HepG2 (cell line): ENCODE measurements at regions of chr16 and their contacts with region 1.

Region 1: GRCh38 chr16:31873556-31874365 is at the start of gene ZNF267:
- DNase-seq: peak; percentile 94
- ATAC-seq: peak; percentile 90
- H3K4me3 ChIP-seq: peak within 1 kb of the TSS; percentile 89 to 99 (median 95)
- H3K27ac ChIP-seq: peak within 1 kb of the TSS; percentile 89
- H3K4me1 ChIP-seq: peaks cover 59% of the 10 kb centered on the region
- H3K27me3 ChIP-seq: peaks cover 0 to 13% of the 10 kb centered on the region in 2 experiments; a peak in 2 of 5 replicates
- CTCF ChIP-seq: no peak
- EP300 ChIP-seq: 0 out of 4 replicates have a peak, but pooled peaks of 1 of the 2 experiments have one; percentile 9
- POLR2A ChIP-seq: peak; percentile 86 to 92
- RAD21 ChIP-seq: peak; percentile 12; the same call in 1 of the 2 replicates
- total RNA-seq, gene ZNF267: 30.0 and 42.4 TPM in 2 replicates

Region 2: DNA sequence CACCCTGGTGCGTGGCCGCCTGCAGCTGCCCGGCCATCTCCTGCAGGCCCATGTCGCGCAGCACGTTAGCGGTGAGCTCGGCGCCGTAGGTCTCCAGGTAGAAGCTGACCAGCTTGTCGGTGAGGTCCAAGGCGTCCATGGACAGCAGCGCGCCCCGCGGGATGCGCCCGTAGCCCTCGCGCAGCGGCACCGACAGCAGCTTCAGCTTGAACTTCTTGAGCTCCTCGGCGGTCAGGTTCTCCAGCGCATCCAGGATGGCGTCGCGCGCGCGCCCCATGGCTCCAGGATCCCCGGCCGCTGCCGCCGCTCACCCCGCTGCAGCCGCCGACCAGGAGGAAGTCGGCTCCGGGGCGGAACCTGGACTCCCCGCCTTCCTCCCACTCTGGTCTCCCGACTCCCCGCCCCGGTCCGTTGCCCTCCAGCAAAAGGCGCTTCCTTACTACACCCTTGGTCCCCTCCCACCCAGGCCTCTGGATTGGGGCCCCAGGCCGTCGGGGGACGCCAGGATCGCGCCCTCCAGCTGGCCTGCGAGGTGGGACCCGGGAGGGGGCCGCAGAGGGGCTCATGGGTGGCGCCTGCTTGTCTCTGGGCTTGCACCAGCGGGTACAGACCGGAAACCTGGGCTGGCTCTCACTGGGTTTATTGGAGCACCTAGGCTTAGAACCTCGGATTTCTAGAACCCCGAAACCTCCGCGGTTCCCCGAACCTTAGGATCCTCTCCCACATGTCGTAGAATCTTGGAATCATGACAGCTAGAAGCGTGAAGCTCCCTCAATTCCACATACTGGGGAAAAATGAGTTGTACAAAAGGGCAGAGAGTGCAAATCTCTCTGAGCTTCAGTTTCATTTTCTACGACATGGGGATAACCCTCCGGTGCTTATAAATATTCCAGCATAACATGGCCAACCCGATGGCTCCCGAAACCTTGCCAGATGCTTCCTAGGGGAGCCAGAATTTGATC is 671.1 kb before region 1 on chr16 and contains the start of gene PYCARD:
- CTCF ChIA-PET with region 1: no interaction called
- POLR2A ChIA-PET with region 1: no interaction called
- in situ Hi-C with region 1: loop called (anchors 25 kb)
- intact Hi-C with region 1: no loop called
- DNase-seq: no peak
- ATAC-seq: peak; percentile 23
- H3K4me3 ChIP-seq: peak within 1 kb of the TSS; percentile 61 to 77 (median 61)
- H3K27ac ChIP-seq: no peak within 1 kb of the TSS
- H3K4me1 ChIP-seq: peaks cover 57% of the 10 kb centered on the region
- H3K27me3 ChIP-seq: peaks cover 0 to 35% of the 10 kb centered on the region in 2 experiments; a peak in 4 of 5 replicates
- CTCF ChIP-seq: no peak
- EP300 ChIP-seq: no peak
- POLR2A ChIP-seq: peak in 1 of 2 experiments; percentile 38; a peak in 2 of 4 replicates
- RAD21 ChIP-seq: peak; percentile 19; the same call in 1 of the 2 replicates
- total RNA-seq, gene PYCARD: 4.4 and 4.8 TPM in 2 replicates

Region 3: GRCh38 chr16:31476303-31477219 is 397.2 kb before region 1 on chr16:
- CTCF ChIA-PET with region 1: no interaction called
- POLR2A ChIA-PET with region 1: interaction called, 11 read pairs
- in situ Hi-C with region 1: no loop called
- intact Hi-C with region 1: no loop called
- DNase-seq: peak; percentile 63
- ATAC-seq: peak; percentile 63
- H3K4me3 ChIP-seq: peak overlapping the region; percentile 71 to 94 (median 92)
- H3K27ac ChIP-seq: peak overlapping the region; percentile 80
- H3K4me1 ChIP-seq: peaks cover 77% of the 10 kb centered on the region
- H3K27me3 ChIP-seq: peaks cover 0 to 16% of the 10 kb centered on the region in 2 experiments; a peak in 3 of 5 replicates
- CTCF ChIP-seq: no peak
- EP300 ChIP-seq: no peak
- POLR2A ChIP-seq: peak; percentile 8 to 72; a peak in 2 of 4 replicates
- RAD21 ChIP-seq: no peak

Region 4: GRCh38 chr16:31678649-31679325 is 195.0 kb before region 1 on chr16:
- CTCF ChIA-PET with region 1: no interaction called
- POLR2A ChIA-PET with region 1: no interaction called
- in situ Hi-C with region 1: no loop called
- intact Hi-C with region 1: no loop called
- DNase-seq: no peak
- ATAC-seq: no peak
- H3K4me3 ChIP-seq: no peak overlapping the region
- H3K27ac ChIP-seq: no peak overlapping the region
- H3K4me1 ChIP-seq: no peaks in the 10 kb centered on the region
- H3K27me3 ChIP-seq: no peaks in the 10 kb centered on the region
- CTCF ChIP-seq: no peak
- EP300 ChIP-seq: no peak
- POLR2A ChIP-seq: no peak
- RAD21 ChIP-seq: no peak

Region 5: GRCh38 chr16:31713071-31713944 is 160.5 kb before region 1 on chr16:
- CTCF ChIA-PET with region 1: no interaction called
- POLR2A ChIA-PET with region 1: interaction called, 22 read pairs
- in situ Hi-C with region 1: no loop called
- intact Hi-C with region 1: loop called (anchors 5 kb)
- DNase-seq: peak; percentile 97
- ATAC-seq: peak; percentile 86
- H3K4me3 ChIP-seq: peak overlapping the region; percentile 74 to 99 (median 91)
- H3K27ac ChIP-seq: peak overlapping the region; percentile 95
- H3K4me1 ChIP-seq: peaks cover 42% of the 10 kb centered on the region
- H3K27me3 ChIP-seq: no peaks in the 10 kb centered on the region; a peak in 1 of 5 replicates
- CTCF ChIP-seq: peak; percentile 31
- EP300 ChIP-seq: no peak
- POLR2A ChIP-seq: peak; percentile 97 to 99
- RAD21 ChIP-seq: peak; percentile 48